Caco-2 (cell line): ENCODE measurements at regions of chr7 and their contacts with region 1.

Region 1: DNA sequence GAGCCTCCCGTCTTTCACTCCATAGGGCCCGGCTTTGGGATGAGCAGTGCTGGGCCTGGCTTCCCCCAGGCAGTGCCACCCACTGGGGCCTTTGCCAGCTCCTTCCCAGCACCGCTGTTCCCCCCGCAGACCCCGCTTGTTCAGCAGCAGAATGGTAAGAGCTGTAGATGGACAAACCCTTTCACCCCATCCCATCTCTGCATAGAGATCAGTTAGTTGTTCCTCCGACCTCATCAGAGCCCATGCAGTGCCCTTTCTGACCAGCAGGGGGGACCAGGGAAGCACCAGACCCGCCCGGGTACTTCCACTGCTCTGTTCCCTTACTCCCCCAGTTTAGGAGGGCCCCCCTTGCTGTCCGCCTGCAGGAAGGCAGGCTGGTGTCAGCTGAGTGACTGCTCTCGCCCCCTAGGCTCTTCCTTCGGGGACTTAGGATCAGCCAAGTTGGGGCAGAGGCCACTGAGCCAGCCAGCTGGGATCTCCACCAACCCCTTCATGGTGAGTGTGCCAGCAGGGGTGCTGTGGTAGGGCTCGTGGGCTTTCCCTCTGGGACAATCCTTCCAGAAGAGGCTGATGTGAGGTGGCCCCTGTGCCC is 9.8 kb downstream of the SAP25 start:
- DNase-seq: peak; percentile 77 to 84
- H3K4me3 ChIP-seq: no peak overlapping the region
- H3K4me3 Mint-ChIP-seq: no peak overlapping the region
- H3K27ac Mint-ChIP-seq: peak overlapping the region; percentile 66
- H3K4me1 ChIP-seq: peaks cover 11% of the 10 kb centered on the region; the same call in 1 of the 2 replicates
- H3K4me1 Mint-ChIP-seq: peaks cover 7% of the 10 kb centered on the region
- H3K27me3 ChIP-seq: no peaks in the 10 kb centered on the region
- H3K27me3 Mint-ChIP-seq: no peaks in the 10 kb centered on the region
- CTCF ChIP-seq: peak; percentile 92 to 95

Region 2: GRCh38 chr7:100469227-100470044 is 94.5 kb before region 1 on chr7:
- CTCF ChIA-PET with region 1: interaction called, 21 read pairs
- POLR2A ChIA-PET with region 1: no interaction called
- intact Hi-C with region 1: loop called (anchors 1 kb)
- DNase-seq: peak; percentile 86 to 92
- H3K4me3 ChIP-seq: no peak overlapping the region
- H3K4me3 Mint-ChIP-seq: no peak overlapping the region
- H3K27ac Mint-ChIP-seq: no peak overlapping the region
- H3K4me1 ChIP-seq: peaks cover 4% of the 10 kb centered on the region; the same call in 1 of the 2 replicates
- H3K4me1 Mint-ChIP-seq: no peaks in the 10 kb centered on the region
- H3K27me3 ChIP-seq: no peaks in the 10 kb centered on the region
- H3K27me3 Mint-ChIP-seq: no peaks in the 10 kb centered on the region
- CTCF ChIP-seq: peak; percentile 97 to 98

Region 3: GRCh38 chr7:100478966-100479665 is 84.8 kb before region 1 on chr7 and contains the start of gene TSC22D4:
- CTCF ChIA-PET with region 1: interaction called, 18 read pairs
- POLR2A ChIA-PET with region 1: interaction called, 4 read pairs
- intact Hi-C with region 1: loop called (anchors 1 kb)
- DNase-seq: peak; percentile 87 to 93
- H3K4me3 ChIP-seq: peak within 1 kb of the TSS; percentile 94
- H3K4me3 Mint-ChIP-seq: peak within 1 kb of the TSS; percentile 100
- H3K27ac Mint-ChIP-seq: peak within 1 kb of the TSS; percentile 80
- H3K4me1 ChIP-seq: peaks cover 7% of the 10 kb centered on the region; the same call in 1 of the 2 replicates
- H3K4me1 Mint-ChIP-seq: peaks cover 22% of the 10 kb centered on the region
- H3K27me3 ChIP-seq: no peaks in the 10 kb centered on the region
- H3K27me3 Mint-ChIP-seq: no peaks in the 10 kb centered on the region
- CTCF ChIP-seq: no peak
- total RNA-seq, gene TSC22D4: 27.2 and 32.0 TPM in 2 replicates

Region 4: GRCh38 chr7:100538654-100539435 is 25.1 kb before region 1 on chr7 and contains the start of gene AGFG2:
- CTCF ChIA-PET with region 1: interaction called, 17 read pairs
- POLR2A ChIA-PET with region 1: no interaction called
- intact Hi-C with region 1: no loop called
- DNase-seq: peak; percentile 100
- H3K4me3 ChIP-seq: peak within 1 kb of the TSS; percentile 89
- H3K4me3 Mint-ChIP-seq: peak within 1 kb of the TSS; percentile 87
- H3K27ac Mint-ChIP-seq: peak within 1 kb of the TSS; percentile 72
- H3K4me1 ChIP-seq: peaks cover 37% of the 10 kb centered on the region
- H3K4me1 Mint-ChIP-seq: peaks cover 22% of the 10 kb centered on the region
- H3K27me3 ChIP-seq: no peaks in the 10 kb centered on the region
- H3K27me3 Mint-ChIP-seq: no peaks in the 10 kb centered on the region
- CTCF ChIP-seq: no peak
- total RNA-seq, gene AGFG2: 58.5 and 60.7 TPM in 2 replicates

Region 5: GRCh38 chr7:100545360-100546128 is 18.4 kb before region 1 on chr7:
- CTCF ChIA-PET with region 1: interaction called, 17 read pairs
- POLR2A ChIA-PET with region 1: interaction called, 7 read pairs
- intact Hi-C with region 1: loop called (anchors 1 kb)
- DNase-seq: peak; percentile 69 to 75
- H3K4me3 ChIP-seq: no peak overlapping the region
- H3K4me3 Mint-ChIP-seq: peak overlapping the region; percentile 52
- H3K27ac Mint-ChIP-seq: peak overlapping the region; percentile 80
- H3K4me1 ChIP-seq: peaks cover 61% of the 10 kb centered on the region
- H3K4me1 Mint-ChIP-seq: peaks cover 62% of the 10 kb centered on the region
- H3K27me3 ChIP-seq: no peaks in the 10 kb centered on the region
- H3K27me3 Mint-ChIP-seq: no peaks in the 10 kb centered on the region
- CTCF ChIP-seq: no peak

Region 6: GRCh38 chr7:100611974-100612729 is 48.2 kb after region 1 on chr7 and contains the start of gene MOSPD3:
- CTCF ChIA-PET with region 1: interaction called, 10 read pairs
- POLR2A ChIA-PET with region 1: interaction called, 3 read pairs
- intact Hi-C with region 1: no loop called
- DNase-seq: peak; percentile 99
- H3K4me3 ChIP-seq: peak within 1 kb of the TSS; percentile 50
- H3K4me3 Mint-ChIP-seq: peak within 1 kb of the TSS; percentile 86
- H3K27ac Mint-ChIP-seq: peak within 1 kb of the TSS; percentile 95
- H3K4me1 ChIP-seq: peaks cover 10% of the 10 kb centered on the region; the same call in 1 of the 2 replicates
- H3K4me1 Mint-ChIP-seq: no peaks in the 10 kb centered on the region
- H3K27me3 ChIP-seq: no peaks in the 10 kb centered on the region
- H3K27me3 Mint-ChIP-seq: no peaks in the 10 kb centered on the region
- CTCF ChIP-seq: no peak
- total RNA-seq, gene MOSPD3: 24.6 and 24.7 TPM in 2 replicates

Region 7: GRCh38 chr7:100719523-100720319 is 155.8 kb after region 1 on chr7:
- CTCF ChIA-PET with region 1: no interaction called
- POLR2A ChIA-PET with region 1: no interaction called
- intact Hi-C with region 1: no loop called
- DNase-seq: peak; percentile 31 to 71
- H3K4me3 ChIP-seq: peak overlapping the region; percentile 47
- H3K4me3 Mint-ChIP-seq: peak overlapping the region; percentile 65
- H3K27ac Mint-ChIP-seq: no peak overlapping the region
- H3K4me1 ChIP-seq: peaks cover 9% of the 10 kb centered on the region
- H3K4me1 Mint-ChIP-seq: peaks cover 7% of the 10 kb centered on the region
- H3K27me3 ChIP-seq: no peaks in the 10 kb centered on the region
- H3K27me3 Mint-ChIP-seq: no peaks in the 10 kb centered on the region
- CTCF ChIP-seq: no peak

Region 8: DNA sequence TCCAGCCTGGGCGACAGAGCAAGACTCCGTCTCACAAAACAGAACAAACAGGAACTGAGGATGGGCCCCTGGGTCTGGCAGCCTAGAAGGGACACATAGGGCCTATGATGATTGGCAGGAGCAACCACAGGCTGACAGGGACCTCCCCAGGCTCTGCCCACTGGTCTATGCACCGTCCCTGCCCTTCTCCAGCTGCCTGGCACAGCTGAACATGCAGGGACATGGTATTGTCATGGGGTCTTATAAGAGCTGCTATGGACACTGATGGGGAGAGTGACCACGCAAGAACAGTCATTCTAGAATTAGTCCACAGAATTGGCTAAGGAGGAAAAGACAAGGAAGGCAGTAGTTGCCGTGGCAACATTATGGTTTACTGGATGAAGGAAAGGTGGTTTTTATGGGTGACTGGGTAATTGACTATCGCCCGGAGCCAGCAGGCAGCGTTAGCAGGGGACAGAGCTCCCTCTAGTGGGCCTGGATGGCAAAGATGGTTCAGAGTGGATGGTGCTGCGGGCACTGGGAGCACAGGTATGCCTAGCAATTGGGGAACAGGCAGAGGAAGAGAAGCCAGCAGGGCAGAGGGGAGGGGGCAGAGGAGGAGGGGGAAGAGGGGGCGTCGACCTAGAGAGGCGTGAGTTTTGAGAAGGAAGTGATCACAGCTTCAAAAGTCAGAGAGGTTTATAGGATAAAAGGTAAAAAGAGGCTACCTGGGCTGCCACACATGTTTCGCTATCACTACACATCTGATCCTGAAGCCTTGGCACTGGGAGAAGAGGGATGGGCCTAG is 513.6 kb after region 1 on chr7:
- CTCF ChIA-PET with region 1: no interaction called
- POLR2A ChIA-PET with region 1: interaction called, 11 read pairs
- intact Hi-C with region 1: no loop called
- DNase-seq: peak; percentile 87 to 91
- H3K4me3 ChIP-seq: no peak overlapping the region
- H3K4me3 Mint-ChIP-seq: no peak overlapping the region
- H3K27ac Mint-ChIP-seq: no peak overlapping the region
- H3K4me1 ChIP-seq: no peaks in the 10 kb centered on the region
- H3K4me1 Mint-ChIP-seq: peaks cover 5% of the 10 kb centered on the region
- H3K27me3 ChIP-seq: no peaks in the 10 kb centered on the region
- H3K27me3 Mint-ChIP-seq: peaks cover 10% of the 10 kb centered on the region
- CTCF ChIP-seq: peak; percentile 69 to 96